ENCODE measurements at regions of chr12 and their contacts with region 1.

Region 1: GRCh38 chr12:452667-453210 is 7.0 kb upstream of the B4GALNT3 start:
- DNase-seq: peak; percentile 80
- ATAC-seq: peak; percentile 61
- H3K4me3 Mint-ChIP-seq: no peak overlapping the region
- H3K27ac Mint-ChIP-seq: no peak overlapping the region
- H3K4me1 Mint-ChIP-seq: peaks cover 6% of the 10 kb centered on the region
- H3K27me3 Mint-ChIP-seq: peaks cover 3% of the 10 kb centered on the region

Region 2: GRCh38 chr12:401235-402028 is 51.3 kb before region 1 on chr12 and contains the start of gene CCDC77:
- CTCF ChIA-PET with region 1: interaction called, 11 read pairs
- POLR2A ChIA-PET with region 1: no interaction called
- intact Hi-C with region 1: no loop called
- DNase-seq: peak; percentile 96
- ATAC-seq: peak; percentile 100
- H3K4me3 Mint-ChIP-seq: no peak within 1 kb of the TSS
- H3K27ac Mint-ChIP-seq: no peak within 1 kb of the TSS
- H3K4me1 Mint-ChIP-seq: peaks cover 5% of the 10 kb centered on the region
- H3K27me3 Mint-ChIP-seq: no peaks in the 10 kb centered on the region
- total RNA-seq, gene CCDC77: 17.3 to 18.7 TPM

Region 3: DNA sequence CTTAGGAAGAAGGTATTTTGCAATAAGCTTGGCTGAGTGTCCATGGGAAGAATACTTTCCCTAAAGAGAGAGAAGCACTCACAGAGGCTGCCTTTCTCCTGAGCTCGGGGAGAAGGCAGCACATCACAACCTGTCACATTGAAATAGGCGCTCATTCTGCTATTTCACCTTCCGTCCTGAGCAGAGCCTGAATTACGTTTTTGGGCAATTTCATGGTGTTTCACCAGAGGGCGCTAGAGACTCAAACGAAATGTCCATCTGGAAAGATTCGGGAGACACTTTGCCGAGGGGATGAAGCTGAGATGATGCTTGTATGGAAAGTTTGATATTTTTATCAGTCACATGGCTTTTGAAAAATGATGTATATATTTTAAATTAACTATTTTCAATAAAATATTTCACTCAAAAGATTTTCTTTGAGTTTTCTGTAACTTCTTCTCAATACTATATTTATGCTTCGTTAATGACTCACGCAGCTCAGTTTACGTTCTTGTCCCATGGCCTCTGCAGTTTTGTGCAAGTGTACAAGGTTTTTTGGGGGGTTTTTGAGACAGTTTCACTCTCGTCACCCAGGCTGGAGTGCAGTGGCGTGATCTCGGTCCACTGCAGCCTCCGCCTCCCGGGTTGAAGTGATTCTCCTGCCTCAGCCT is 10.4 kb before region 1 on chr12:
- CTCF ChIA-PET with region 1: interaction called, 36 read pairs
- POLR2A ChIA-PET with region 1: no interaction called
- intact Hi-C with region 1: no loop called
- DNase-seq: peak; percentile 55
- ATAC-seq: no peak
- H3K4me3 Mint-ChIP-seq: no peak overlapping the region
- H3K27ac Mint-ChIP-seq: no peak overlapping the region
- H3K4me1 Mint-ChIP-seq: no peaks in the 10 kb centered on the region
- H3K27me3 Mint-ChIP-seq: no peaks in the 10 kb centered on the region

Region 4: GRCh38 chr12:484117-484516 is 31.4 kb after region 1 on chr12:
- CTCF ChIA-PET with region 1: interaction called, 14 read pairs
- POLR2A ChIA-PET with region 1: no interaction called
- intact Hi-C with region 1: no loop called
- DNase-seq: no peak
- ATAC-seq: no peak
- H3K4me3 Mint-ChIP-seq: no peak overlapping the region
- H3K27ac Mint-ChIP-seq: no peak overlapping the region
- H3K4me1 Mint-ChIP-seq: peaks cover 7% of the 10 kb centered on the region
- H3K27me3 Mint-ChIP-seq: peaks cover 5% of the 10 kb centered on the region

Region 5: DNA sequence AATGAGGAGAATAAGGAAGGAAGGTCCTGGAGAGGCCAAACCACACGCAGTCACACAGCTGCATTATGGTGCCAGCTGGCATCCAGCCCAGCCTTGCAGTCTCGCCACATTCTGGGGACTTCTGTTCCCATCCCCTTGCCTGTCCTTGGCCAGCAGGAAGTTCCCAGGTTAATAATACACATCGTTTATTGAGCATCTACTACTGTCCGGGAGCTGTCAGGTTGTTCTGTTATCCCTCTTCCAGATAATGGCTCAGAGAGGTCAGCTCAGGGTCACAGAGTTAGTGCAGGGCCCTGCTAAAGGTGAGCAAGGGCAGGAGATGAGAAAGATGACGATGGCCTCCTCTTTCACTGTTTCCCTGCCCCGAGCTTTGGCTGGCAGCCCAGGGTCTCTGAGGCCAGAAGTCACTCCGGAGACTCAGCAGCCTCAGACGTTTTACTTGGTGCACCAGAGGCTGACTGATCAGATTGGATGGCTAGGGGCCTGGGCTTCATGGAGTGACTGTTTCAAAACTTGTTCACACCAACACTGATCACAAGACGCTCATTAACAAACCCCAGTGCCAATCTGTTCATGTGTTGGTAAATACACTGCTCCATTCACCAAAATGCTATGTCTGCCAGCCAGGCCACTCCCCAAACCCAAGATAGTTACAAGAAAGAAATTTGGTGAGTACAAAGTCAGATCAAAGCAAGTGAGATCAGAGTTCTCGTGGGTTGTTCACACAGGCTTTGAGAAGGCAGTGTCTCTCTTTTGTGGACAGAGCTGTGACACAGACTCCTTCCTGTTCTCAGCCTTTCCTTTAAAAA is 86.2 kb after region 1 on chr12:
- CTCF ChIA-PET with region 1: interaction called, 130 read pairs
- POLR2A ChIA-PET with region 1: no interaction called
- intact Hi-C with region 1: no loop called
- DNase-seq: peak; percentile 41
- ATAC-seq: peak; percentile 94
- H3K4me3 Mint-ChIP-seq: no peak overlapping the region
- H3K27ac Mint-ChIP-seq: peak overlapping the region; percentile 58
- H3K4me1 Mint-ChIP-seq: peaks cover 20% of the 10 kb centered on the region
- H3K27me3 Mint-ChIP-seq: no peaks in the 10 kb centered on the region

Region 6: GRCh38 chr12:546921-547845 is 94.4 kb after region 1 on chr12:
- CTCF ChIA-PET with region 1: interaction called, 130 read pairs
- POLR2A ChIA-PET with region 1: no interaction called
- intact Hi-C with region 1: loop called (anchors 1 to 2 kb)
- DNase-seq: peak; percentile 84
- ATAC-seq: peak; percentile 85
- H3K4me3 Mint-ChIP-seq: no peak overlapping the region
- H3K27ac Mint-ChIP-seq: no peak overlapping the region
- H3K4me1 Mint-ChIP-seq: peaks cover 24% of the 10 kb centered on the region
- H3K27me3 Mint-ChIP-seq: peaks cover 4% of the 10 kb centered on the region

Region 7: DNA sequence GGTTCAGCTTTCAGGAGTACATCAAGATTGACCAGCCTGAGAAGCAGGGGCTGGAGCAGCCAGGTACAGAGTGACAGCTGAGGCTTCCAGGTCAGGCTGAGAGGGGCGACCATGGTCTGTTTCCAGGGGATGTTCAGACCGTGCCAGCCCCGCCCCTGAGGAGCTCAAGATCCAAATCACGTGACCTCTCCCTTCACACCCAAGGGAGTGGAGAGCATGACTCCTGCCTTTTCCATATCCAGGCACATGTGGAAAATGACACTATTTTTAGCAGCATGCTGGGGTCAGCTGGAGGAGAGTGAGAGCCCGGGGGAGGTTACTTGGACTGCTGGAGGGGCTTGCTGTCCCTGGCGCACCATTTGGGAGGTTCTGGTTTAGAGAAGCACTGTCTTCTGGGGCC is 99.7 kb after region 1 on chr12:
- CTCF ChIA-PET with region 1: interaction called, 73 read pairs
- POLR2A ChIA-PET with region 1: no interaction called
- intact Hi-C with region 1: loop called (anchors 1 to 2 kb)
- DNase-seq: no peak
- ATAC-seq: no peak
- H3K4me3 Mint-ChIP-seq: no peak overlapping the region
- H3K27ac Mint-ChIP-seq: peak overlapping the region; percentile 18
- H3K4me1 Mint-ChIP-seq: peaks cover 45% of the 10 kb centered on the region
- H3K27me3 Mint-ChIP-seq: no peaks in the 10 kb centered on the region

Measured in activated CD4-positive, alpha-beta T cell treated with anti-CD3 and anti-CD28 coated beads for 36 hours (primary cell).